Brain microvascular endothelial cell (primary cell): ENCODE measurements at regions of chr14 and their contacts with region 1.

Region 1: GRCh38 chr14:67166450-67166853 is 22.8 kb upstream of the GARIN2 start:
- DNase-seq: peak; percentile 39
- H3K4me3 ChIP-seq: no peak overlapping the region
- H3K27ac ChIP-seq: no peak overlapping the region
- H3K27me3 ChIP-seq: no peaks in the 10 kb centered on the region
- CTCF ChIP-seq: peak; percentile 81

Region 2: DNA sequence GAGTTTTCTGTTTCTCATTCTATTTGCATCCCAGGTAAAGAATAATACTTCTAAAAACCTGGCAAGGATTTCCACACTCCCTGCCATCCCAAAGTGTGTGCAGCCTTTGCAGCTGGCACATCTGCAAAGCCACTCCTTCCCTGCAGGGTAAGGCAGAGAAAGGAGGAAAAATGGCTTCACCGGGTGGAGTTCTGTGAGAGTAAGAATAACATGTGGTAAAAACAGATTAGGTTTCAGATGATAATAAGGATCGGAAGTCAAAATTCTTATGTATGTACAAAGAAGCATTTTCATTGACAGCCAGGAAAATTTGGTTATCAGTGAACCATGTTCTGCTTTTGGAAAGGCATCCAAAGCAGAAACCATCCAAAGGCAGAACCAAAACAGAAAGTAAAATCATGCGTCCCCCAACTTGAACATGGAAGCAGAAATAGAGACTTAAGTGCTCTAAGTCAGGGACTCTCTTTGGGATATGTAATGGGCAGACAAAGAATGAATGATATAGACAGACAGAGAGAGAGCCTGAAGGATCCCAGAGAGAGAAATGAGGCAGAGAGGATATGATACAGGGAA is 872.8 kb before region 1 on chr14:
- in situ Hi-C with region 1: no loop called
- DNase-seq: no peak
- H3K4me3 ChIP-seq: no peak overlapping the region
- H3K27ac ChIP-seq: no peak overlapping the region
- H3K27me3 ChIP-seq: no peaks in the 10 kb centered on the region
- CTCF ChIP-seq: no peak

Region 3: DNA sequence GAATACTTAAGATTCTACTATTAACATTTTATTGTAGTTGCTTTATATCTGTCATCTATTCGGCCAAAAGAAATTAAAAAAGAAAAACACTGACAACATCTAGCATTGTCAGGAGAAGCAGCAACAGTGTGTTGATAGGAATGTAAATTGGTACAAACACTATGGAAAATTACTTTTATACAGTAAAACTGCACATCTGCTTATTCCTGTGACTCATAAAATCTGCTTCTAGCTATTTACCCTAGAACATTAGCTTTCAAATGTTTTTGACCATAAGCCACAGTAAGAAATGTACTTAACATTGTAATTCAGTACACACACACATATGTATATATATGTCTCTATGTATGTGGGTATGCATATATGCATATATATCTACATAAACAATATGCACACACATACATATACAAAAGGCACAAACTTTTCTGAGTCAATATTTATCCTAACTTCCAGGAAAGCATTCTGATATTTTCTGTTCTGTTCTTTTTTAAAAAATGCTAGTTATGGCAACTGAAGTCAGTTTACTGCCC is 256.1 kb before region 1 on chr14:
- in situ Hi-C with region 1: no loop called
- DNase-seq: no peak
- H3K4me3 ChIP-seq: no peak overlapping the region
- H3K27ac ChIP-seq: no peak overlapping the region
- H3K27me3 ChIP-seq: no peaks in the 10 kb centered on the region
- CTCF ChIP-seq: no peak

Region 4: DNA sequence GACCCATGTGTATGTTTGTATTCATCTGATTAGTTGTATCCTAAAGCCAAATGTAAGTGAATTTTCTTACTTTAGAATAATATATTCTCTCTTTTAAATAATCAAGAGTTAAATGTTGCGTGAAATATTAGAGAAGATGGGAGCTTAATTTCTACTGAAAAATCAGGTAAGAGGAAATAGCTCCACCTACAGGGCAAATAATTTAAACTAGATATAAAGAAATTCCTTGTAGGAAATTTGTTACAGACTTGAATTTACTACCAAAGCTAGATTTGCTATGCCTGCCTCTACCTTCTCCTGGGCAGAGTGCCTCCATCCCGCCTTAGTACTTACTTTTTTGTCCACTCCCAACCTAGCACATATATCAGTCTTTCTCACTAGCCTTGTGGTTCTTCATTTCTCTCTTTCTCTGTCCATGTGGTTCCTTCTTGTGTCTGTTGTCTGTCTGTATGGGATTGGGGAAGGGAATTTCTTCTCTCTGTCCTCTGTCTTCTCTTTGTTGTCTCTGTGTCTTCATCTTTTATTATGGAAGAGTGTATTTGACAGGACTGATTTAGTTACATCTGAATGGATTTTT is 119.5 kb after region 1 on chr14:
- in situ Hi-C with region 1: loop called (anchors 25 kb)
- DNase-seq: no peak
- H3K4me3 ChIP-seq: no peak overlapping the region
- H3K27ac ChIP-seq: no peak overlapping the region
- H3K27me3 ChIP-seq: no peaks in the 10 kb centered on the region
- CTCF ChIP-seq: peak; percentile 21

Region 5: GRCh38 chr14:67411820-67412421 is 245.5 kb after region 1 on chr14 and contains the start of gene PLEK2:
- in situ Hi-C with region 1: no loop called
- DNase-seq: no peak
- H3K4me3 ChIP-seq: peak within 1 kb of the TSS; percentile 61
- H3K27ac ChIP-seq: no peak within 1 kb of the TSS
- H3K27me3 ChIP-seq: no peaks in the 10 kb centered on the region
- CTCF ChIP-seq: no peak